Activated naive CD4-positive, alpha-beta T cell treated with anti-CD3 and anti-CD28 coated beads for 36 hours (primary cell): ENCODE measurements at regions of chr6 and their contacts with region 1.

Region 1: GRCh38 chr6:16319813-16320532 is 81.6 kb downstream of the GMPR start:
- DNase-seq: peak; percentile 86
- H3K4me3 Mint-ChIP-seq: peak overlapping the region; percentile 54
- H3K27ac Mint-ChIP-seq: peak overlapping the region; percentile 85
- H3K4me1 Mint-ChIP-seq: peaks cover 75% of the 10 kb centered on the region
- H3K27me3 Mint-ChIP-seq: no peaks in the 10 kb centered on the region

Region 2: DNA sequence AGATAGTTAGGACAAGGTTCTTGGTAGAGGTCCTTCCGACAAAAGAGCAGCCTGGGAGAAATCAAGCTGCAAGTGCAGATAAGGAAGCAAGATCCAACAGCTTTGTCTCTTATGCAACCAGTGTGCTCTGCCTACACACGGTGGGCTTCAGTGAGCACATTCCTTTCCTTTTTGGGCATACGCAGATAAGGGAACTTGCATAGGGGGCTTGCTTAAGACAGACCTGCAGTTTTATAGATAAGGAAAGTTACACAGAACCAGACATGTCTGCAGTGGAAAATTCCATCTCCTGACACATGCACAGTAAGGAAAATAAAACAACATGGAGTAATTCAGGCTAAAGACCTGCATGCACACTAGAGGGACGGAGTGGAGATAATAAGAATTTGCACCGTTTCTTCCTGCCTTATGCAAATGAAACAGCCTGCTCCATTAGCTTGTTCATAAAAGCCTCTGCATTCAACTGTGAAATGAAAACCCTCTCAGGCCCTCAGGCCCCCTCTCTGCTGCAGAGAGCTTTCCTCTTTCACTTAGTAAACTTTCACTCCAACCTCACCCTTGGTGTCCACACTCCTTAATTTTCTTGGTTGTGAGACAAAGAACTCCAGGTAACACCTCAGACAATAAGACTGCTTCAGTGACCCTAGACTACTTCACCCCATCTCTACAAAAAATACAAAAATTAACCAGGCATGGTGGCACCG is 288.5 kb before region 1 on chr6:
- CTCF ChIA-PET with region 1: no interaction called
- intact Hi-C with region 1: no loop called
- DNase-seq: no peak
- H3K4me3 Mint-ChIP-seq: no peak overlapping the region
- H3K27ac Mint-ChIP-seq: no peak overlapping the region
- H3K4me1 Mint-ChIP-seq: no peaks in the 10 kb centered on the region
- H3K27me3 Mint-ChIP-seq: peaks cover 3% of the 10 kb centered on the region

Region 3: DNA sequence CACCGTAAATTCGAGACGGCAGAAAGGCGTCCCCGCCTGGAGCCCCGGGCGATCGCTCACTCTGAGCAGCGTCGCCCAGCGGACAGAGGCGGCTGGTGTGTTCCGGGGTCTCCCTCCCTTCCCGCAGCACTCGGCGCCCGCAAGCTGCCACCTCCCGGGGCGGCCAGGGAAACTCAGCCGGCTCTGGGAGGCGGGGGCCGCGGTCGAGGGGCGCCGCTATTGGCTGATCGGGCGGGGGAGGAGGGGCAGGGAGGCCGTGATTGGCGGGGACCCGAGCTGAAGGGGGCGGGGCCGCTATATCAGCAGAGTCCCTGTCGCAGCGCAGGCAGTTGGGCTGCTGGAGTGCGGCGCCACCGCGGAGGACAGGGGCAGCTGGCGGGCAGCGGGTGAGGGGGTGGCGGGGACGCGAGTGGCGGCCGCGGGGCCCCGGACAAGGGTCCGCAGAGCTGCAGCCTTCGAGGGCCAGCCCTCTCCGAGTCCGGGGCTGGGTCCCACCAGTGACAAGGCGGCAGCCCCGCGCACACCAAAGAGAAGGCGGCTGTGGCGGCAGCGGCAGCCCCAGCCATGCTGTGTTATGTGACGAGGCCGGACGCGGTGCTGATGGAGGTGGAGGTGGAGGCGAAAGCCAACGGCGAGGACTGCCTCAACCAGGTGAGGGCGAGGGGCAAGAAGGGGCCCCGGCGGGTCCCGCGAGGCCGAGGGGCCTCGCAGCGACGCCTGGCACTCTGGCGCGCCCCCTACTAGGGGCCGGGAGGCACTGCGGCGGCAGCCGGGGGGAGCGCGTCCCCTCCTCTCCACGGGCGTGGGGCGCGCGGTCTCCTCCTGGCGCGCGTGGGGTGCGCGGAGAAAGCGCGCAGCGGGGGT is 191.0 kb before region 1 on chr6 and contains the start of gene MYLIP:
- CTCF ChIA-PET with region 1: no interaction called
- intact Hi-C with region 1: loop called (anchors 2 kb)
- DNase-seq: peak; percentile 98
- H3K4me3 Mint-ChIP-seq: peak within 1 kb of the TSS; percentile 86
- H3K27ac Mint-ChIP-seq: peak within 1 kb of the TSS; percentile 92
- H3K4me1 Mint-ChIP-seq: peaks cover 30% of the 10 kb centered on the region
- H3K27me3 Mint-ChIP-seq: peaks cover 7% of the 10 kb centered on the region
- total RNA-seq, gene MYLIP: 7.3 to 8.1 TPM

Region 4: GRCh38 chr6:16420715-16421461 is 100.9 kb after region 1 on chr6:
- CTCF ChIA-PET with region 1: interaction called, 3 read pairs
- intact Hi-C with region 1: loop called (anchors 1 kb)
- DNase-seq: peak; percentile 66
- H3K4me3 Mint-ChIP-seq: peak overlapping the region; percentile 45
- H3K27ac Mint-ChIP-seq: peak overlapping the region; percentile 95
- H3K4me1 Mint-ChIP-seq: peaks cover 42% of the 10 kb centered on the region
- H3K27me3 Mint-ChIP-seq: no peaks in the 10 kb centered on the region

Region 5: DNA sequence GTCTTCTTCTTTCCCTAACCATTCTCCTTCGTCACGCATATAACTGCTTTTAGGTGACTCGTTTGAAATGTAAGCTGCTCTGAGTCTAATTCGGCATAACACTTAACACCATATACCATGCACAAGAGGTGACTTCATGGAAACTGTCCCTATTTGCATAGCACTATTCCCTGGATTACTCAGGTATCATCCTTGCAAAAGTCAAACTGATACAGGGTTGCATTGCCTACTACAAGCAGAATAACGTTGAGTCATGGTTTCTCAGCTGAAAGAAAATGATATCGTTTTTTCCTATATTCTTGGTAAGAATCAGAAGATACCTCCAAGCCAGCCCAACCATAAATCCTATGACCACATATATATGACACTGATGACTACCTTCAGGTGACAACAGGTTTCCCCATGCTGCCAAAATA is 213.8 kb after region 1 on chr6:
- CTCF ChIA-PET with region 1: no interaction called
- intact Hi-C with region 1: loop called (anchors 1 kb)
- DNase-seq: peak; percentile 22
- H3K4me3 Mint-ChIP-seq: no peak overlapping the region
- H3K27ac Mint-ChIP-seq: no peak overlapping the region
- H3K4me1 Mint-ChIP-seq: peaks cover 21% of the 10 kb centered on the region
- H3K27me3 Mint-ChIP-seq: no peaks in the 10 kb centered on the region

Region 6: GRCh38 chr6:16712931-16713484 is 393.0 kb after region 1 on chr6:
- CTCF ChIA-PET with region 1: no interaction called
- intact Hi-C with region 1: loop called (anchors 5 kb)
- DNase-seq: peak; percentile 23
- H3K4me3 Mint-ChIP-seq: peak overlapping the region; percentile 51
- H3K27ac Mint-ChIP-seq: peak overlapping the region; percentile 75
- H3K4me1 Mint-ChIP-seq: peaks cover 29% of the 10 kb centered on the region
- H3K27me3 Mint-ChIP-seq: no peaks in the 10 kb centered on the region

Region 7: GRCh38 chr6:16894301-16894700 is 574.3 kb after region 1 on chr6:
- CTCF ChIA-PET with region 1: no interaction called
- intact Hi-C with region 1: no loop called
- DNase-seq: no peak
- H3K4me3 Mint-ChIP-seq: no peak overlapping the region
- H3K27ac Mint-ChIP-seq: no peak overlapping the region
- H3K4me1 Mint-ChIP-seq: no peaks in the 10 kb centered on the region
- H3K27me3 Mint-ChIP-seq: peaks cover 10% of the 10 kb centered on the region

Region 8: GRCh38 chr6:17706580-17707370 is 1386.8 kb after region 1 on chr6 and contains the start of gene NUP153:
- CTCF ChIA-PET with region 1: no interaction called
- intact Hi-C with region 1: loop called (anchors 2 kb)
- DNase-seq: peak; percentile 100
- H3K4me3 Mint-ChIP-seq: peak within 1 kb of the TSS; percentile 93
- H3K27ac Mint-ChIP-seq: peak within 1 kb of the TSS; percentile 99
- H3K4me1 Mint-ChIP-seq: peaks cover 28% of the 10 kb centered on the region
- H3K27me3 Mint-ChIP-seq: no peaks in the 10 kb centered on the region
- total RNA-seq, gene NUP153: 65.3 to 67.2 TPM